Ovary (tissue), 10 donors: ENCODE measurements at regions of chr12 and their contacts with region 1.

Region 1: GRCh38 chr12:109093022-109093918 is at the start of gene ALKBH2:
- DNase-seq: peak; percentile 89 to 95 (median 93)
- H3K4me3 ChIP-seq: peak within 1 kb of the TSS; percentile 48
- H3K27ac ChIP-seq: peak within 1 kb of the TSS in 1 of 2 donors; percentile 63
- H3K4me1 ChIP-seq: peaks cover 7% of the 10 kb centered on the region
- H3K27me3 ChIP-seq: no peaks in the 10 kb centered on the region
- CTCF ChIP-seq: peak; percentile 96 to 98 (median 97)
- EP300 ChIP-seq: peak; percentile 79
- POLR2A ChIP-seq: peak; percentile 27
- total RNA-seq, gene ALKBH2: 11.3 to 26.4 (median 21.1) TPM

Region 2: DNA sequence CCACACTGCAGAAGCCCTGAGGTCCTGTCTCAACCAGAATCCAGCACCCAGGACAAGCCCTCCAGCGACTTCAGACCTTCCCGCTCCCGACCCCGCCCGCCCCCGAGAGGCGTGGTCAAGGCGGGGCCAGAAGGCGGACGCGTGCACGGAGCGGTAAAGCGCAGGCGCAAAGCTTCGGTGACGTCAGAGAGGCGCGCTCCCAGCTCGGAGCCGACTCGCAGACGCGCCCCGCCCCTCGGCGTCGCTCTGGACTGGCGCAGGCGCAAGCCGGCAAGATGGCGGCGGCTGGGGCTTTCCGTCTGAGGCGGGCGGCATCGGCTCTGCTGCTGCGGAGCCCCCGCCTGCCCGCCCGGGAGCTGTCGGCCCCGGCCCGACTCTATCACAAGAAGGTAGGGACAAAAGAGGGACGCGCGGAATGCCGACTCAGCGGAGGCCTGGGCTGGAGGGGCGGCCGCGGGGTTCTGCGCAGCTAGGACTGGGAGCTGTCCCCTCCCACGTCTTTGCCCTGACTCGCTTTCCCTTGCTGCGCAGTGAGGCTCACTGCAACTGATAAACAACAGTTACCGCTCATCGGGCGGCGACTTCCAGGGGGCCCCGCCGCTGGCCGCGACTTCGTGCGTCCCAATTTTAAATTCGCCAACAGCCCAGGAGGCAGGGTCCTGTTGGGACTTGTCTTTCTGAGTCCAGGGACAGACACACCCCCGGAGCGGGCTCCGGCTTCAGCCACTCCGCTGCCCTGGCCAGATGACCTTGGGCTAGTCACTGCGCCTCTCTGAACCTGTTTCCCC is 530.7 kb before region 1 on chr12 and contains the start of gene ISCU:
- intact Hi-C with region 1: loop called in 3 of 4 experiments (anchors 2 to 10 kb)
- DNase-seq: peak; percentile 98 to 100 (median 99)
- H3K4me3 ChIP-seq: peak within 1 kb of the TSS; percentile 96
- H3K27ac ChIP-seq: peak within 1 kb of the TSS; percentile 78 to 88
- H3K4me1 ChIP-seq: peaks cover 12% of the 10 kb centered on the region
- H3K27me3 ChIP-seq: no peaks in the 10 kb centered on the region
- CTCF ChIP-seq: no peak
- EP300 ChIP-seq: no peak
- POLR2A ChIP-seq: peak; percentile 92
- total RNA-seq, gene ISCU: 110 to 238 (median 156) TPM

Region 3: GRCh38 chr12:108572166-108572790 is 521.0 kb before region 1 on chr12:
- intact Hi-C with region 1: loop called in 2 of 4 experiments (anchors 5 to 10 kb)
- DNase-seq: no peak
- H3K4me3 ChIP-seq: no peak overlapping the region
- H3K27ac ChIP-seq: no peak overlapping the region
- H3K4me1 ChIP-seq: no peaks in the 10 kb centered on the region
- H3K27me3 ChIP-seq: no peaks in the 10 kb centered on the region
- CTCF ChIP-seq: no peak
- EP300 ChIP-seq: no peak
- POLR2A ChIP-seq: no peak

Region 4: GRCh38 chr12:108826101-108826806 is 267.0 kb before region 1 on chr12:
- intact Hi-C with region 1: loop called in 1 of 4 experiments (anchors 10 kb)
- DNase-seq: peak; percentile 47 to 61 (median 56)
- H3K4me3 ChIP-seq: peak overlapping the region; percentile 4
- H3K27ac ChIP-seq: peak overlapping the region in 1 of 2 donors; percentile 68
- H3K4me1 ChIP-seq: peaks cover 14% of the 10 kb centered on the region
- H3K27me3 ChIP-seq: no peaks in the 10 kb centered on the region
- CTCF ChIP-seq: no peak
- EP300 ChIP-seq: no peak
- POLR2A ChIP-seq: no peak

Region 5: GRCh38 chr12:108856428-108857157 is 236.7 kb before region 1 on chr12:
- intact Hi-C with region 1: loop called in 1 of 4 experiments (anchors 10 kb)
- DNase-seq: peak; percentile 21 to 63 (median 57)
- H3K4me3 ChIP-seq: peak overlapping the region; percentile 82
- H3K27ac ChIP-seq: peak overlapping the region; percentile 67 to 70
- H3K4me1 ChIP-seq: peaks cover 6% of the 10 kb centered on the region
- H3K27me3 ChIP-seq: no peaks in the 10 kb centered on the region
- CTCF ChIP-seq: no peak
- EP300 ChIP-seq: no peak
- POLR2A ChIP-seq: no peak